ENCODE measurements at regions of chr11 and their contacts with region 1.

Region 1: DNA sequence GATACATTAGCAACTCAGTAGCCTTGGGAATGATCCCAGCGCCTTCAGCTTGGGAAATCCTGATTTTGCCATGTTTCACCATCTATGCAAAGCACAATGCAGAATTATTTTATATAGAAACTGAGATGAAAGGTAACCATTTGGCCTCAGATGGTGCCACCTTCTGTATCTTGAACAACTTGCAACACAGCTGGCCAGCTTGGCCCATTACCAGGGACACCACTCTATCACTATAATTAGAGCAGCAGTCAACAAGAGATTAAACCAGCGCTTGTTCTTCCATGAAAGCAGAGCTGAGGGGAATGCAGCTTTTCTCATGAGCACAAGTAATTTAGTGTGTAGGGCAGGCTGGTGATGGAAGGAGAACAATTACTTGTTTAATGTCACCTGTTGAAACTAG is 6.7 kb upstream of the ZDHHC13 start:
- DNase-seq: peak; percentile 69
- ATAC-seq: peak; percentile 96

Region 2: DNA sequence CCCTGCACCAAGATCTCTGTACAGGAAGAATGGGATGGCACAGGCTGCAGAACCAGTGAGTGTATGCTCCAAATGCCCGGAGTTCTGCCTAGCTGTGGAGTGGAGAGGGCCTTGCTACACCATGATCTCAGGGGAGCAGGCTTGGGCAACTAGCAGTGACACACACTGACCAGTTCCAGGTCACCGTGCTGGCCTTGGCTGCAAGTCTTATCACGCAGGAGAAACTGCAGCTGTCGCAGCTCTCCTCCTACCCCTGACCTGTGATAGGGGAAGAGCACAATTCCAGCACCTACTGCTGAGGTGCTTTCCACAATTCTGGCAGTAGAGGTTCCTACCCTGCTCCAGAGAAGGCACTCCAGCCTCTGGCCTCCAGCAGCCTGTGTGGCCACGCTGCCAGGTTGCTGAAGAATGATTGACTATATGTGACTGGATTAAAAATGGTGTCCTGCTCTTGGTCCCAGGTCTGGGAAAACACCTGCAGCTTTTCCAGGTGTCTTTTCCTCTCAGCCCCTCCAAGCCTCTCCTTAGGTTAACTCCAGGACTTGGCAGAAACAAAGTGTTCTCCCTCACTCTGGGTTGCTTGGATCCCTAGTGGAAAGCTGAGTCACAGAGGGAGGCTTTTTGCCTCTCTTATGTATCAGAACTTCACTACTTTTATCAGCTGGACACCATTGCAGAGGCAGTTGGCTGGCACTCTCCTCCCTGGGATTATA is 275.4 kb before region 1 on chr11:
- intact Hi-C with region 1: no loop called
- DNase-seq: no peak
- ATAC-seq: no peak

Region 3: DNA sequence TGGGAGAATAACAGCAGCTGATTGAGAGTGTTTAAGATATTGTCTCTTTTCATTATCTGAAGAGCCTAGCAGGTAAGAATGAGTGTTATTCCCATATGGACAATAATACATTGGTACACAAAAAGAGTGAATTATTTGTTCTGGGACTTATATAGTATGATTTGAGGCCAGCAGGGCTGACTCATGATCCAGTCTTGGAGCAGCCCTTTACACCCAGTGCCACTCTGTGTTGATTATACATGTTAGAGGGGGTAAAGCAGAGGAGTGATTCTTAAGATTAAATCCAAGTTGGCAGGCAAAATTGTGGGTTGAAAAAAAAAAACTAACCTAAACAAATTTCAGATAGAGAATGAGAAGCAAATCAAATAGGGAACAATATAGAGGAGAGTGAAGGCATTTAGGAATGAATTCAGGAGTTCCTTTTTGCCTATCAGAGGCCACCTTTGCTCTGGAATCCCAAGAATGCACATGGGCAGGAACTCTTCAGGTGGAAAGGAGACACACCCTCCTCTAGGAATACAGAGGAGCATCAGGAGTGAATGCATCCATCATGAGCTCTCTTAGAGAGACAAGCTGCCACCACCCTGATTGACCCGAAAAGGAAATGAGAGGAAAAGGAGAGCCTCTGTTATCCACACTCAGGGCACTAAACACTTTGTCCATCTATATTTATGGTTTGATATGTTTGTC is 151.9 kb before region 1 on chr11:
- intact Hi-C with region 1: no loop called
- DNase-seq: no peak
- ATAC-seq: no peak

Region 4: DNA sequence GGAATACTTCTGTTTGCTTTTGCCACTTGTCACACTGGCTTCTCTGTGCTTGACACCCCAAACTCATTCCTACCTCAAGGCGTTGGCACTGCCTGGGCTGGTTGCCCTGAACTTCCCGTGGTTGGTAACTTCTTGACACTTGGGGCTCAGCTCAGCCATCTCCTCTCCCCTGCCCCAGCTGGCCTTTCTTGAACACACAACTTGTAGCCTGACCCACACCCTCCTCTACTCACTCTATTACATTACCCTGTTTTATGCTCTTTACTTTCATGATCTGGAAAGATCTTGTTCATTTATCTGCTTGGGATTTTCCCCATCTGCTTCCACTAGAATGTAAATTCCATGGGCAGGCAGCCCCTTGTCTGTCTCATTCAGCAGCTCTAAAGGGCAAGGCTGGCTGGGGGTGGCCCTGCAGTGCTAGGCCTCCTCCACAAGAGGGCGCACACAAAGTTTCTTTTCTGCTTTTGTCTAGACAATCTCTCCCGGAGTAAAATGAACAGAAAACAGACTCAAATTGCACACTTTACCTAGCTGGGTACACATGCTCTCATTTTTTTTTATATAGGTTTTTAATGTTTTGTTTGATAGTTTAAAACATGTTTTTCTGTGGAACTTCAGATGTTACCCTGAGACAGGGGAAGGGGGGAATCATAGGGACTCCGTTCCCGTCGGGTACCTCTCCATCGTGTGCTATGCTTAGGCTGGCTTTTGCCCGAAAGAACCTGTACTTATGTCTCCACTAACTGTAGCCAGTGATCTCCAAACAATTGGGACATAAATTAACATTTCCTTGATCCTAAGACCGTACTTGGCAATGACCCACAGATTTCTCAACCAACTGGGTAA is 33.3 kb before region 1 on chr11:
- intact Hi-C with region 1: loop called (anchors 5 kb)
- DNase-seq: peak; percentile 55
- ATAC-seq: peak; percentile 85